ENCODE measurements at regions of chr2 and their contacts with region 1.

Region 1: GRCh38 chr2:25991965-25992364 is 9.7 kb upstream of the KIF3C start:
- DNase-seq: no peak
- ATAC-seq: no peak
- H3K4me3 ChIP-seq: no peak overlapping the region
- H3K4me3 Mint-ChIP-seq: no peak overlapping the region
- H3K27ac ChIP-seq: no peak overlapping the region
- H3K27ac Mint-ChIP-seq: peak overlapping the region in 1 of 2 donors; percentile 29
- H3K4me1 ChIP-seq: no peaks in the 10 kb centered on the region
- H3K4me1 Mint-ChIP-seq: no peaks in the 10 kb centered on the region
- H3K27me3 ChIP-seq: no peaks in the 10 kb centered on the region
- H3K27me3 Mint-ChIP-seq: peaks cover 0 to 3% of the 10 kb centered on the region in 2 donors
- CTCF ChIP-seq: no peak

Region 2: GRCh38 chr2:25651071-25651470 is 340.9 kb before region 1 on chr2:
- intact Hi-C with region 1: no loop called
- DNase-seq: no peak
- ATAC-seq: no peak
- H3K4me3 ChIP-seq: no peak overlapping the region
- H3K4me3 Mint-ChIP-seq: no peak overlapping the region
- H3K27ac ChIP-seq: no peak overlapping the region
- H3K27ac Mint-ChIP-seq: no peak overlapping the region
- H3K4me1 ChIP-seq: no peaks in the 10 kb centered on the region
- H3K4me1 Mint-ChIP-seq: no peaks in the 10 kb centered on the region
- H3K27me3 ChIP-seq: no peaks in the 10 kb centered on the region
- H3K27me3 Mint-ChIP-seq: no peaks in the 10 kb centered on the region
- CTCF ChIP-seq: no peak

Region 3: DNA sequence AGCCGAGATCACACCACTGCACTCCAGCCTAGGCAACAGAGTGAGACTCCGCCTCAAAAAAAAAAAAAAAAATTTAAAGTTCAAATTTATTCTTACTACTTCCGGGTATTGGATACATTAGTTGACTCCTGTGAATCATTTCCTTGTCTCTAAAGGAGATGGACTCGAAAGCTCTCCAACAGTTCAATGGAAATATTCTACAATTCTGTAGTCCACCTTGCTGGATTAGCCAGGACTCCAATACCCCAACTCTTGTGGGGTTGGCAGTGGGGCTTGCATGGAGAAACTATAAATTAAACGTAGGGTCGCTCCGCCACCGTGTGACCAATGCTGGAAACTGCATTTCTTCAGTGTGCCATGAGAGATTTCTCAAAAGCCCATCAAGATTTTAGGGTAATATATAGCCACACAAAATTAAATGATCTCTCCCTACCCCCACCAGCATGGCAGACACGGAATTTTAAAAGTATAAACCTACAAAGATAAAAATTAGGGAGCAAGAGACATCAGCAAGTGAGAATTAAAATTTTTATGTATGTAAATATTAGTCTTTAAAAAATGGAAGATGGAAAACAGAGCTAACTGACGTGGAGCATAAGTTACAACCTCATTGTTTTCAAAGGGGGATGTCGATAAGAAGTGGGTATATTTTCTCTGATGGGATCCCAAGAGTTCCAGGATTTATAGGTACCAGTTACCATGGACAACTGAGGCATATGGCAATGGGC is 153.2 kb after region 1 on chr2:
- intact Hi-C with region 1: loop called (anchors 1 kb)
- DNase-seq: peak; percentile 42 to 78
- ATAC-seq: peak; percentile 71 to 91 (median 84)
- H3K4me3 ChIP-seq: no peak overlapping the region
- H3K4me3 Mint-ChIP-seq: no peak overlapping the region
- H3K27ac ChIP-seq: no peak overlapping the region
- H3K27ac Mint-ChIP-seq: no peak overlapping the region
- H3K4me1 ChIP-seq: no peaks in the 10 kb centered on the region
- H3K4me1 Mint-ChIP-seq: peaks cover 5% of the 10 kb centered on the region in 2 donors
- H3K27me3 ChIP-seq: no peaks in the 10 kb centered on the region
- H3K27me3 Mint-ChIP-seq: peaks cover 3 to 8% of the 10 kb centered on the region in 2 donors
- CTCF ChIP-seq: peak; percentile 72

Region 4: DNA sequence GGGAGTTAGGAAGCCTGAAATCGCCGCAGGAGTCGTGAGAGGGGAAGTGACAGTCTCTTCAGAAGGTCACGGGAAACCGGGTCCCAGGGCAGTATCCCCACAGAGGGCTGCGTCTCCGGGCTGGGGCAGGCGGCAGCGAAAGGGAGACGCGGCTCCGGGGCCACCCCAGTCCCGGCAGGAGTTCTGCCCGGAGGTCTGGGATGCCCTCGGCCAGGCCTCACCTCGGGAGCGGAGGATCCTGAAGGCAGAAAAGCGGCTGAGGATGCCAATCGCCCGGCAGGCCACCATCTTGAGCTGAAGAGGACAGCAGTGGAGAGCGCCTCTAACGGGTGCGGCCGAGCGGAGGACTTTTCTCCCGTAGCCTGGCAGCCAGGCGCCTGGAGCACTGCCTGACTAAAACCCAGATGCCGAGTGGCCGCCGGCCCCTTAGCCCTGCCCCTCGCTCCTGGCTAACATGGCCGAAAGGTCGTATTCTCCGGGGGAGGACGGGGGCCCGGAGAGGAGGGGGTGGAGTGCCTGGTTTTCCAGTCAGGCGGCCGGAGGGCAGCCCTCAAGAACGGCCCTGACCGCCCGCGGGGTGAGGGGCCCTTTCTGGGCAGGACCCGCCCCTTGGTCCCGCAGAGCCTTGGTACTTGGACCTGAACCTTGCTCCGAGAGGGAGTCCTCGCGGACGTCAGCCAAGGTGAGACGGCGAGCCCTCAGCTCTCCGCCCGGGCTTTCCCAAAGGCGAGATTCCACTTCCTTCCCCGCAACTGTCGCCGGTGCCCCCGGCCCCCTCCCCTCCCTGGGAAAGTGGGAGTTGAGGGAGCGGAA is 252.6 kb after region 1 on chr2 and contains the starts of genes HADHA and HADHB:
- intact Hi-C with region 1: loop called (anchors 2 kb)
- DNase-seq: peak; percentile 83 to 91
- ATAC-seq: peak; percentile 82 to 94 (median 87)
- H3K4me3 ChIP-seq: peak within 1 kb of the TSS; percentile 79
- H3K4me3 Mint-ChIP-seq: peak within 1 kb of the TSS; percentile 100
- H3K27ac ChIP-seq: peak within 1 kb of the TSS; percentile 97
- H3K27ac Mint-ChIP-seq: peak within 1 kb of the TSS; percentile 91 to 95
- H3K4me1 ChIP-seq: peaks cover 21% of the 10 kb centered on the region
- H3K4me1 Mint-ChIP-seq: peaks cover 58 to 60% of the 10 kb centered on the region in 2 donors
- H3K27me3 ChIP-seq: no peaks in the 10 kb centered on the region
- H3K27me3 Mint-ChIP-seq: no peaks in the 10 kb centered on the region
- CTCF ChIP-seq: no peak
- total RNA-seq, gene HADHA: 66.6 to 76.1 (median 68.9) TPM
- total RNA-seq, gene HADHB: 43.1 to 58.8 (median 53.0) TPM

Region 5: GRCh38 chr2:26577434-26578112 is 585.6 kb after region 1 on chr2:
- intact Hi-C with region 1: loop called (anchors 5 kb)
- DNase-seq: peak; percentile 46 to 79
- ATAC-seq: peak; percentile 82 to 95 (median 90)
- H3K4me3 ChIP-seq: no peak overlapping the region
- H3K4me3 Mint-ChIP-seq: no peak overlapping the region
- H3K27ac ChIP-seq: no peak overlapping the region
- H3K27ac Mint-ChIP-seq: no peak overlapping the region
- H3K4me1 ChIP-seq: no peaks in the 10 kb centered on the region
- H3K4me1 Mint-ChIP-seq: no peaks in the 10 kb centered on the region
- H3K27me3 ChIP-seq: no peaks in the 10 kb centered on the region
- H3K27me3 Mint-ChIP-seq: peaks cover 18 to 29% of the 10 kb centered on the region in 2 donors
- CTCF ChIP-seq: peak; percentile 97